ENCODE measurements at regions of chr13 and their contacts with region 1.

Region 1: GRCh38 chr13:35953537-35954206 is 177.5 kb downstream of the DCLK1 start:
- DNase-seq: peak; percentile 79
- ATAC-seq: peak; percentile 89

Region 2: DNA sequence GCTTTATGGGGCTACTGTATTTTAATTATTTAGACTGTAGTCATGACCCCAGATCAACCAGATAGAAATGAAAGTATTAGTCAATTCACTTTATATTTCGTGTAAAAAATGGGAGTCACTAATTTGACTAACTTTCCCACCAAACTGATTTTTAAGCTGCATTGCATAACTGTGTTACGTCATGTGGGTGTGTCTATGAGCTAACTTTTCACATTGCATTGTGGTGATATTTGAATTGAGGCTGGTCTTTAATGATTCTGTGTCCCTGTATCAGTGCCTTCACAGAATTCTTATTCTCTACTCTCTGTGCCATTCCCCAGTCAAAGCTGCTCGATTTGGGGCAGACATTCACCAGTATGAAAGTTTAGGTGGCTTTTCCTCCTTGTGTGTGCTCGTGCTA is 304.5 kb before region 1 on chr13:
- intact Hi-C with region 1: loop called (anchors 10 kb)
- DNase-seq: no peak
- ATAC-seq: peak; percentile 63

Region 3: GRCh38 chr13:35818633-35819067 is 135.0 kb before region 1 on chr13:
- intact Hi-C with region 1: loop called (anchors 5 kb)
- DNase-seq: no peak
- ATAC-seq: peak; percentile 63

Region 4: GRCh38 chr13:35888457-35888883 is 65.2 kb before region 1 on chr13:
- intact Hi-C with region 1: no loop called
- DNase-seq: no peak
- ATAC-seq: no peak